ENCODE measurements at regions of chr7 and their contacts with region 1.

Region 1: DNA sequence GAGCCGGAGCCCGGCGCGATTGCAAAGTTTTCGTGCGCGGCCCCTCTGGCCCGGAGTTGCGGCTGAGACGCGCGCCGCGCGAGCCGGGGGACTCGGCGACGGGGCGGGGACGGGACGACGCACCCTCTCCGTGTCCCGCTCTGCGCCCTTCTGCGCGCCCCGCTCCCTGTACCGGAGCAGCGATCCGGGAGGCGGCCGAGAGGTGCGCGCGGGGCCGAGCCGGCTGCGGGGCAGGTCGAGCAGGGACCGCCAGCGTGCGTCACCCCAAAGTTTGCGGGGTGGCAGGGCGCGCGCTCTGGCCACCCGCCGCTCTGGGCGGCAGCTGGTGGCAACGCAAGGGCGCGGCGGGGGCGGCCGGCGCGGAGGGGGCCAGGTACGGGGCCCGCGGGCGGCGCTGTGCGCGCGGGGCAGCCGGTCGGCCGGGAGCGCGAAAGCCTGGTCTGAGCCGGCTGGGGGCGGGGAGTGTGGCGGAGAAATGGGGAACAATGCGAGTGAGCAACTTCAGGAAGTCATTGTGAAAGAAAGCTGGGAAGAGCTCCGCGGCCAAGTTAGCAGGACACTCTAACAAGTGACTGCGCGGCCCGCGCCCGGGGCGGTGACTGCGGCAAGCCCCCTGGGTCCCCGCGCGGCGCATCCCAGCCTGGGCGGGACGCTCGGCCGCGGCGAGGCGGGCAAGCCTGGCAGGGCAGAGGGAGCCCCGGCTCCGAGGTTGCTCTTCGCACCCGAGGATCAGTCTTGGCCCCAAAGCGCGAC is at the start of gene IKZF1:
- DNase-seq: peak; percentile 55
- CTCF ChIP-seq: peak; percentile 25

Region 2: GRCh38 chr7:50369143-50370026 is 65.1 kb after region 1 on chr7:
- in situ Hi-C with region 1: loop called (anchors 10 kb)
- DNase-seq: peak; percentile 43
- CTCF ChIP-seq: peak; percentile 72

Region 3: DNA sequence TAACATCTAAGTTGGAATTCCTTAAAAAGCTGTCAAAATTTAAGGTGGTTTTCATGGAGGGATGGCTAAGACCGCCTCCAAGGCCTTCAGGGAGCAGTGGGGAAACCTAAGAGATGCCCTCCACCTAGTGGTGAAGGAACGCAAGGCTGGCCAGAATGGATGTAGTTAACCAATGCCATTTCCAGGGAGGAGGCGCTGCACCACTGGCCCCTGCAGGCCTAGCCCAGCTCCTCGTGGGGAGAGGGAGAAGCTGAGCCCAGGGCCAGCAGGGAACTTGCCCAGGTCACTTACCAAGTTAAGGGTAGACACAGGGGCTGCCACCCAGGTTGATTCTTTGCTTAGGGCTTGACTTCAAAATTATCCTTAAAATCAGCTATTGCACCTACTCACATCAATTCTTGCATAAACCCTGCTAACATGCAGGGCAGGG is 113.8 kb after region 1 on chr7:
- in situ Hi-C with region 1: loop called (anchors 10 kb)
- DNase-seq: peak; percentile 69
- CTCF ChIP-seq: peak; percentile 96

Measured in GM13977 (cell line).